GM10248 (cell line): ENCODE measurements at regions of chr1 and their contacts with region 1.

Region 1: DNA sequence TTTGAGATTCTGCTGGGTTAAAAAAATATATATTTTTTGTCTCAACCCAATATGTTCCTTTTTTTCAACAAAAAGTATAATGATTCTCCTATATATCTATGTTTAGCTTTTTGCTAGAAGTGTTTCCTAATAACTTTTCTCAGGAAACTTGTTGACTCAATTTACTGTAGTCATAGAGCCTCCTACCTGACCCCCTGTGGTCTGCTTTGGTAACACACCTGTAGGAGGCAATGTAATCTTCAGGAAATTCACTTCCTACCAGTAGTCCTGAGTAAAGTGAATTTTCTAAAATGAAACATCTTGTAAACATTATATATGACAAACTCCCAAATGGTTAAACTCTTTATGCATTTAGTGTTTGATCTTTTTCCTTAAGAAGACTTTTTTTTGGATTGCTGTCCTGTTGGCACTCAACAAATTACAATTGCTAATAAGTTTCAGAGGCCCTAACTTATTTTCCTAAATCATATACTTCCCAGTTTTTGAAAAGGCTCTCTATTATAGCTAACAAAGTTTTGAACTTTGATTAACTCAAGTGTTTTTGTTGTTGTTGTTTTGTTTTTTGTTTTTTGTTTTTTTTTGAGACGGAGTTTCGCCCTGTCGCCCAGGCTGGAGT is 118.3 kb downstream of the OLFML2B start:
- DNase-seq: peak; percentile 31
- CTCF ChIP-seq: peak; percentile 40

Region 2: DNA sequence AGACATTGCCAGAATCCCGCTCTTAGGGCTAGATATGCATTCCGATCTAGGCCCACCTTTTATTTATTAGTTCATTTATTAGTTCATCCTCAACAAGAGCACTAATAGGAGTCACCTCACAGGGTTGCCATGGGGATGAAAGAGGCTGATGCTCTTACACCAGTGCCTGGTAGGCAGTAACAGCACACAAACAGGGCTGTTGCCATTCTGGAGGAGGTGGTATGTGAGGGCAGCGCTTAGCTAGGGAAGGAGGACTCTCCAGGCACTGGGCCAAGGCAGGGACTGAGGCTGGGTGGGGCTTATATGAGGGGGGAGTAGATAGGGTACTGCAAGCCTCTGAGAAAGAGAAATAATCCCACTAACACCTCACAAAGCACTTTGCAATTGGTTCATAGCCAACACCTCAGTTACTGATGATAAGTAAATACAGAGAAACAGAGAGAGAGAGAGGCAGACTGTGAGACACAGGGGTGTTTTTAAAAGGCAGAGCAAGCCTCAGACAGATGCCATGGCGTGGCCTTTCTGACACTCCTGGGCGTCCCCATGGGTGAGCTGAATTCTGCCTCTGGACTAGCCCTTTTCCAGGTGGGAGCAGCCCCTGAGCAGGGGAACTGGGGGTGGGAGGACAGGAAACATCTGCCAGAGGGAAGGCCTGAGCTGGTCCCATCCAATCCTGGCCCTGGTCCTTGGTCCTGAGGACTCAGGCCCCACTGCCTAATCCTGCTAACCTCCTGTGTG is 394.2 kb before region 1 on chr1:
- CTCF ChIA-PET with region 1: no interaction called
- POLR2A ChIA-PET with region 1: no interaction called
- DNase-seq: no peak
- CTCF ChIP-seq: no peak

Region 3: DNA sequence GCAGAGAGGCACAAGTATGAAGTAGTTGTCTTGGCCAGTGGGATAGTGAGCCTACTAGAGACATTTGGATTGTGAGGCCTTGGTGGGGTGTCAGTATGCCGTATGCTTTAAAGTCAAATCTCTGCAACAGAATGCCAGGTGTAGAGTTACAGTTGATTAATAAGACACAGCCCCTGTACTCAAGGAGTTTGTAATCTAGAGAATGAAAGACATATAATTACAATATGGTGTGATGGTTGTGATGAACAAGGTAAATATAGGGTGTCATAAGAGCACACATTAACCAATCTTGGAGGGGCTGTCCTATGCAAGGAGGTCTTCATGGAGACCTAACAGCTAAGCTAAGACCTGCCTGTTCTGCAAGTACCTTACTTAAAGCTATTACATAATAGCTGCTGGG is 26.1 kb before region 1 on chr1:
- CTCF ChIA-PET with region 1: interaction called, 15 read pairs
- POLR2A ChIA-PET with region 1: no interaction called
- DNase-seq: no peak
- CTCF ChIP-seq: no peak

Region 4: DNA sequence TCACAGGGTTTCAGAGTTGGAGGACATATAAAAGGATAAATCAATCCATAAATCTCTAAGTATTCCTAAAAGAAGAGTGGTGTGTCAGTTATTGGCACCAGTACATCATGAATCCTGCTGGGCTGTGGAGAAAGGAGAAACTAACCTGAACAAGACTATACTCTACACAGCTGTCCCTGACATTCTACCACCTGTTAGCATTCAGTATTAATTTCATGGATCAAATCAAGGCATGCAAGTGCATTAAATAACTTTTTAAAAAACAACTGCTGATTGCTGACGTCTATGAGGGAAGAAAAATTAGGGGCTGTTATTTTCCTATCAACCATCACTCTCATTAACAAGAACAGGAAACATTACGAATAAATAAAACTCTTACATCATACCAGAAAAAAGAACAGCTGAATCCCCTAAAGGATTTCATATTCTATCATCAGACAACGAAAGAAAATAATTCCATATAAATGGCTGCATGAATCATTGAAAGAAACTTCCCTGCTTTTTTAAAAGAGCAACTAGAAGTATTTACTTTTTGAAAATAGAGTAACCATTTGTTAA is 17.6 kb before region 1 on chr1:
- CTCF ChIA-PET with region 1: interaction called, 15 read pairs
- POLR2A ChIA-PET with region 1: no interaction called
- DNase-seq: no peak
- CTCF ChIP-seq: no peak

Region 5: GRCh38 chr1:162069328-162070093 is 164.1 kb after region 1 on chr1 and contains the start of gene NOS1AP:
- CTCF ChIA-PET with region 1: no interaction called
- POLR2A ChIA-PET with region 1: no interaction called
- DNase-seq: peak; percentile 92
- CTCF ChIP-seq: no peak